Heart left ventricle (tissue), 16 donors: ENCODE measurements at regions of chr1 and their contacts with region 1.

Region 1: GRCh38 chr1:21490774-21491553 is 18.3 kb upstream of the ALPL start:
- DNase-seq: no peak
- ATAC-seq: peak in 3 of 4 donors; percentile 54 to 71 (median 57)
- H3K4me3 ChIP-seq: no peak overlapping the region
- H3K27ac ChIP-seq: no peak overlapping the region
- H3K4me1 ChIP-seq: peaks cover 0 to 13% (median 0%) of the 10 kb centered on the region in 12 donors
- H3K27me3 ChIP-seq: peaks cover 0 to 11% (median 0%) of the 10 kb centered on the region in 9 donors
- CTCF ChIP-seq: peak in 10 of 12 donors; percentile 10 to 47 (median 24)
- POLR2A ChIP-seq: no peak

Region 2: DNA sequence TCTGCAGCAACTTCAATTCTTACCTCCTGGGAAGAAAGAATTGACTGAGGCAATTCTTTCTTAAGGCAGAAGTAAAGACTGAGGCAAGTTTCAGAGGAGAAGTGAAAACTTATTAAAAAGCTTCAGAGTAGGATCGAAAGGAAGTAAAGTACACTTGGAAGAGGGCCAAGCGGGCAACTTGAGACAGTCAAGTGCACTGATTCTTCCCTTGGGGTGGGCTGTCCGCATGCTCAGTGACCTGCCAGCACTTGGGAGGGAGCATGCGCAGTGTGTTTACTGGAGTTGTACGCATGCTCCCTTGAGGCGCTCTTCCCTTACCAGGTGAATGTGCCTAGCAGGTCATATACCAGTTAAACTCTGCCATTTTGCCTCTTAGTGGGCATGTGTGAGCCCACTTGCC is 106.3 kb before region 1 on chr1:
- intact Hi-C with region 1: loop called in 1 of 10 experiments (anchors 10 kb)
- DNase-seq: no peak
- ATAC-seq: no peak
- H3K4me3 ChIP-seq: no peak overlapping the region
- H3K27ac ChIP-seq: no peak overlapping the region
- H3K4me1 ChIP-seq: peaks cover 0 to 3% (median 0%) of the 10 kb centered on the region in 12 donors
- H3K27me3 ChIP-seq: peaks cover 0 to 35% (median 0%) of the 10 kb centered on the region in 9 donors
- CTCF ChIP-seq: no peak
- POLR2A ChIP-seq: no peak

Region 3: DNA sequence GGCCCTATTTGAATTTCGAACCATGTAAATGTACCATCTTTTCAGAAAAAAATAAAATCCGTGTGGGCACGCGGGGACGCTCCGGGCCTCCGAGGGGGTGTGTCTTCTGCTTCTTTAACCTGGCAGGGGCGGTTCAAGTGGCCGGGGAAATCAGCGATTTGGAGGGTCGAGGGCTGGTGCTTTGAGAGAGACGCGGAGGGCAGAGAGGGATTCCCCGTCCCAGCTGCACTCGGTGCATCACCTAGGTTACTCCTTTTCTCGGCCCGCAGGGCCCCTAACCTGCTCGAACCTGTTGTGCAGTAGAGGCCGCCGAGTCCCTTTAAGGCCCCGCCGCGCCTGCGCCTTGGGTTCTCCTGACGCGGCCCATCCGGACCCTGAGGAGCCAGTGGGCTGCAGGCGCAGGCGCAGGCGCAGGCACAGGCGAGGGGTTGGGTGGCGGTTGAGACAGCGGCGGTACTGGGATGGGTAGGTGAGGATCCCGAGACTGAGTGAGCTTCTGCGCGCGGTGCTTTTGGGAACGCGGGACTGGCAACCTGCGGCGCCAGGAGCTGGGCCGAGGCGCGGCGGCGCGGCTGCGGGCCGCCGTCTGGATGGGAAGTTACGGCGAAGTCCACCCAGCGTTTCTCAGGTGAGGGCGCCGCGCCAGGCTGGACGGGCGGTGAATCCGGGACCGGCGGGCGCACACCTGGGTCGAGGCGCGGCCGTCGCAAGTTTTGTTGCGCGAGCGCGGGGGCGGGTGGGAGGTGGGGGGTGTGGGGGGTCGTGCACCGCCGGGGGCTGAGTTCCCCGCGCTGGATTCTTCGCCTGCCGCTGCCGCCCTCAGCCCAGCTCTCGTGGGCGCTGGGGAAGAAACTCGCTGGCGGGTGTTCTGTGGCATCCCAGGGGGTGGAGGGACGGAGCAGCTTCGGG is 51.0 kb before region 1 on chr1 and contains the start of gene NBPF3:
- intact Hi-C with region 1: no loop called
- DNase-seq: peak; percentile 82 to 92 (median 88)
- ATAC-seq: peak; percentile 94 to 99 (median 98)
- H3K4me3 ChIP-seq: peak within 1 kb of the TSS; percentile 39 to 94 (median 78)
- H3K27ac ChIP-seq: peak within 1 kb of the TSS in 8 of 12 donors; percentile 31 to 84 (median 56)
- H3K4me1 ChIP-seq: peaks cover 0 to 19% (median 8%) of the 10 kb centered on the region in 12 donors
- H3K27me3 ChIP-seq: peaks cover 0 to 7% (median 0%) of the 10 kb centered on the region in 9 donors
- CTCF ChIP-seq: no peak
- POLR2A ChIP-seq: peak in 1 of 2 donors; percentile 65
- total RNA-seq, gene NBPF3: 1.6 to 7.3 (median 4.1) TPM

Region 4: GRCh38 chr1:21451212-21451812 is 39.7 kb before region 1 on chr1:
- intact Hi-C with region 1: no loop called
- DNase-seq: no peak
- ATAC-seq: no peak
- H3K4me3 ChIP-seq: no peak overlapping the region
- H3K27ac ChIP-seq: no peak overlapping the region
- H3K4me1 ChIP-seq: peaks cover 0 to 12% (median 0%) of the 10 kb centered on the region in 12 donors
- H3K27me3 ChIP-seq: no peaks in the 10 kb centered on the region
- CTCF ChIP-seq: no peak
- POLR2A ChIP-seq: no peak